ENCODE measurements at regions of chr17 and their contacts with region 1.

Region 1: DNA sequence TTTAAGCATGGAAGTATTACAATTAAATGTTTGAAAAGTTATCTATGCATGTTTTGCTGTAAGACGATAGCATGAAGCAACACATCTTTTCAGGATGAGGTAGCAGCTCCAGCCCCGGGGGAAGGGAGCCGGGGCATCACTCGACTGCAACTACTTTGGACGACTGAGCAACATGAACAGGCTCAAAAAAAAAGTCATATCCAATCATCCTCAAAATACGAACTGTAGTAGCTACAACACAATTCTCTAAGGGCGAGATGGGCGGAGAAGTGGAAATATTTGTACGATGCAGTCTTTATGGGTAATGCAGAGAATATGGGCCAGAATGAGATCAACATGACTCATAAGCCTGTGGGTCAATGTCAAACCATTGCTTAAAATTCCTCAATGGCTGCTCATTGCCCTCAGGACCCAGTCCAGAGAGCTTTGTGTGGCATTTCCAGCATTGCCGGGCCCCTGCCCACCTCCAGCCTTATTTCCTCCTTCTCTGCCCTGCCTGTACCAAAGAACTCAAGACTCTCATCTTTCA is 17.6 kb upstream of the SMURF2 start:
- DNase-seq: peak; percentile 99
- ATAC-seq: peak; percentile 90
- H3K4me3 ChIP-seq: peak overlapping the region; percentile 46
- H3K27ac ChIP-seq: peak overlapping the region; percentile 87
- H3K4me1 ChIP-seq: peaks cover 51% of the 10 kb centered on the region
- H3K27me3 ChIP-seq: no peaks in the 10 kb centered on the region
- CTCF ChIP-seq: no peak

Region 2: GRCh38 chr17:64160378-64160777 is 519.4 kb before region 1 on chr17:
- CTCF ChIA-PET with region 1: no interaction called
- POLR2A ChIA-PET with region 1: interaction called, 12 read pairs
- intact Hi-C with region 1: no loop called
- DNase-seq: no peak
- ATAC-seq: no peak
- H3K4me3 ChIP-seq: no peak overlapping the region
- H3K27ac ChIP-seq: no peak overlapping the region
- H3K4me1 ChIP-seq: peaks cover 21% of the 10 kb centered on the region
- H3K27me3 ChIP-seq: no peaks in the 10 kb centered on the region
- CTCF ChIP-seq: no peak

Region 3: DNA sequence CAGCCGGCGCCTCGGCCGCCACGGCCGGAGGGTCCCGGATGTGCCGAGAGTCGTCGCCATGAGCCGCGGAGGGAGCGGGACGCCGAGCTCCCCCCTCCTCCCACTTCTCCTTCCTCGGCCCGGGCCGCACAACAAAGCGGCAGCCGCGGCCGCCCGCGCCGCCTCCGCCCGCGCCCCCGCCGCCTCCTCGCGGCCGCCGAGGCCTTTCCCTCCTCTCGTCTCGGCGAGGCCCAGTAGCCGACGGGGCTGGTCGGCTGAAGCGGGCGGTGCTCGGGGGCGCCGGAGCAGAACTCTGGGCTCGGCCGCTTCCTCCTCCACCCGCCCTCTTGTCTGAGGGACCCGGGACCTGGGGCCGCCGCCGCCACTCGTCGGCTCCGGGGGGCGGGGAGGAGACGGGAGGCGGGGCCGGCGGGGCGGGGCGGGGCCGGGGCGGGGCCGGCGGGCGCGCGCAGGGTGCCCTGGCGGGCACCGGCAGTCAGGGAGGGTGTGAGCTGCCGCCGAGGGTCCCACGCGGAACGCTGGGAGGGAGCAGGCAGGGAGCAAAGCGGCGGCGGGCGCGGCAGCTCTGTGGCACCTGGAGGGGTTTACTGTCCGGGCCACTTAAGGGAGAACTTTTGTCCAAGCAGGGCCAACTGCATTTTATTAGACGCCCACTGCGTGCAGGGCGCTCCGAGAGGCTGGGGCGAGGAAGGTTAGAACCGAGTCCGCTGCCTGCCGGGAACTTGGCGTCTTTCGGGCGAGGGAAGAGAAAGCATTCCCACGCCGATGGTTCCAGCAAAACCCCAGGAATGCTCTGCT is 17.6 kb before region 1 on chr17 and contains the start of gene SMURF2:
- CTCF ChIA-PET with region 1: no interaction called
- POLR2A ChIA-PET with region 1: interaction called, 5 read pairs
- intact Hi-C with region 1: loop called (anchors 1 kb)
- DNase-seq: peak; percentile 74
- ATAC-seq: peak; percentile 74
- H3K4me3 ChIP-seq: peak within 1 kb of the TSS; percentile 99
- H3K27ac ChIP-seq: peak within 1 kb of the TSS; percentile 87
- H3K4me1 ChIP-seq: peaks cover 47% of the 10 kb centered on the region
- H3K27me3 ChIP-seq: no peaks in the 10 kb centered on the region
- CTCF ChIP-seq: no peak
- total RNA-seq, gene SMURF2: 68.2 and 76.6 TPM in 2 replicates

Region 4: DNA sequence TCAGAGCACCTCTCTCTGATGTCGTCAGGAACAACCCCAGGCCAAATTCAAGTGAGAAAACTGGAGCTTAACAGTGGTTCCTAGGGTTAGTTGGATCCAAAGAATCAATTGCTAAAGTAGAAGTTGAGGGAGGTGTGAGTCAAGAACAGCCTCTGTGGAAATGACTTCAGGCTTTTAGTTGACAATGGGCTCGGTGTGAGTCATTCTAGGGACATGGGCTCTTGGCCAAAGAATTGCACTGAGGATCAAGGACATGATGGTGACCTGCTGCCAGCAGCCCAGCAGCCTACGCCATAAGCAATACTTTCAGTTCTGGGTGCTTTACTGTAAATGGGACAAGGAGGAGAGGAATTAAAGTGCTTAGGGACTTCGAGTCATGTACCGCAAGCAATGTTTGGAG is 14.5 kb after region 1 on chr17:
- CTCF ChIA-PET with region 1: no interaction called
- POLR2A ChIA-PET with region 1: no interaction called
- intact Hi-C with region 1: no loop called
- DNase-seq: peak; percentile 99
- ATAC-seq: peak; percentile 78
- H3K4me3 ChIP-seq: no peak overlapping the region
- H3K27ac ChIP-seq: peak overlapping the region; percentile 77
- H3K4me1 ChIP-seq: peaks cover 25% of the 10 kb centered on the region
- H3K27me3 ChIP-seq: no peaks in the 10 kb centered on the region
- CTCF ChIP-seq: no peak

Region 5: GRCh38 chr17:64707019-64707591 is 27.4 kb after region 1 on chr17:
- CTCF ChIA-PET with region 1: interaction called, 11 read pairs
- POLR2A ChIA-PET with region 1: interaction called, 11 read pairs
- intact Hi-C with region 1: loop called (anchors 1 kb)
- DNase-seq: peak; percentile 100
- ATAC-seq: peak; percentile 88
- H3K4me3 ChIP-seq: peak overlapping the region; percentile 50; the same call in 1 of the 2 replicates
- H3K27ac ChIP-seq: peak overlapping the region; percentile 98
- H3K4me1 ChIP-seq: peaks cover 46% of the 10 kb centered on the region
- H3K27me3 ChIP-seq: no peaks in the 10 kb centered on the region
- CTCF ChIP-seq: no peak

Region 6: GRCh38 chr17:64718059-64718458 is 38.3 kb after region 1 on chr17:
- CTCF ChIA-PET with region 1: no interaction called
- POLR2A ChIA-PET with region 1: interaction called, 14 read pairs
- intact Hi-C with region 1: no loop called
- DNase-seq: peak; percentile 75
- ATAC-seq: peak; percentile 70
- H3K4me3 ChIP-seq: no peak overlapping the region
- H3K27ac ChIP-seq: no peak overlapping the region
- H3K4me1 ChIP-seq: no peaks in the 10 kb centered on the region
- H3K27me3 ChIP-seq: no peaks in the 10 kb centered on the region
- CTCF ChIP-seq: no peak

Measured in PC-3 (cell line).